ENCODE measurements at regions of chr2 and their contacts with region 1.

Region 1: GRCh38 chr2:47906157-47907038 is at the start of gene FBXO11:
- DNase-seq: peak; percentile 86
- ATAC-seq: peak; percentile 93
- H3K4me3 ChIP-seq: peak within 1 kb of the TSS; percentile 91 to 98
- H3K27ac ChIP-seq: peak within 1 kb of the TSS; percentile 97
- H3K4me1 ChIP-seq: peaks cover 20% of the 10 kb centered on the region
- H3K27me3 ChIP-seq: no peaks in the 10 kb centered on the region
- CTCF ChIP-seq: no peak; the same call in 1 of the 2 replicates
- total RNA-seq, gene FBXO11: 58.9 TPM

Region 2: DNA sequence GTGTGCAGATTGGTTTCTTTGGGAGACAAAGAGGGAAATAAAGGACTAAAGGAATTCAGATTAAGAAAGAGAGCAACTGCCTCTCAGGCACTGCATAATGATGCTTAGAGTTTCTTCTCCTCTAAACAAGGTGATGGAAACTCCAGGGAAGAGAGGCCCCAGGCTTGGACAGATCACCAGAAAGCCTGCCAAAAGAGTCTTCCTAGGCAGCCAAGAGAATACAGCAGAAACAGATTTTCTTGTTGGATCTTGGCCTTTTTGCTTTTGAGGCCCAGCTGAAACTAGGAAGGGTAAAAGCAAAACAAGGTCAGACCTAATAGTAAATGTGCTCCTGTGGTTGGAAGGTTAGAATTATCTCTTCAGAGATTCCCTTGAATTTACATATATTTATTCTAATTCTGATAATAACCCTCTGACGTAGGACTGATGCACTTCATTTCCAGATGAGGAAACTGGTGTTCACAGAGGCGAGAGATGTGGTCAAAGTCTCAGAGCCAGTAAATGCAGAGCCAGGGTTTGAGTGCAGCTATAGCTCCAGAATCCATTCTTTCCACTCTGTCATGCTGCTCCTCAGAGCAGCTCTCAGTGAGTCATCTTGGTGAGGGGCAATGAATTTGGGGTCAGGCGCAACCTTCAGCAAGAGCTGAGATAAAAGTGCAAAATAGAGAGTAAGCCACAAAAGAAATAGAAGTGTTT is 142.2 kb after region 1 on chr2:
- CTCF ChIA-PET with region 1: no interaction called
- POLR2A ChIA-PET with region 1: no interaction called
- in situ Hi-C with region 1: no loop called
- intact Hi-C with region 1: no loop called
- DNase-seq: no peak
- ATAC-seq: no peak
- H3K4me3 ChIP-seq: no peak overlapping the region
- H3K27ac ChIP-seq: no peak overlapping the region
- H3K4me1 ChIP-seq: no peaks in the 10 kb centered on the region
- H3K27me3 ChIP-seq: peaks cover 3% of the 10 kb centered on the region
- CTCF ChIP-seq: no peak

Region 3: GRCh38 chr2:48070415-48070814 is 164.0 kb after region 1 on chr2:
- CTCF ChIA-PET with region 1: no interaction called
- POLR2A ChIA-PET with region 1: no interaction called
- in situ Hi-C with region 1: no loop called
- intact Hi-C with region 1: no loop called
- DNase-seq: no peak
- ATAC-seq: no peak
- H3K4me3 ChIP-seq: no peak overlapping the region
- H3K27ac ChIP-seq: no peak overlapping the region
- H3K4me1 ChIP-seq: no peaks in the 10 kb centered on the region
- H3K27me3 ChIP-seq: no peaks in the 10 kb centered on the region; the same call in 1 of the 2 replicates
- CTCF ChIP-seq: no peak

Region 4: GRCh38 chr2:48107326-48107925 is 201.0 kb after region 1 on chr2:
- CTCF ChIA-PET with region 1: no interaction called
- POLR2A ChIA-PET with region 1: interaction called, 3 read pairs
- in situ Hi-C with region 1: no loop called
- intact Hi-C with region 1: loop called (anchors 2 kb)
- DNase-seq: peak; percentile 17
- ATAC-seq: no peak
- H3K4me3 ChIP-seq: peak overlapping the region in 1 of 2 experiments; percentile 42; a peak in 1 of 4 replicates
- H3K27ac ChIP-seq: peak overlapping the region; percentile 60
- H3K4me1 ChIP-seq: peaks cover 24% of the 10 kb centered on the region
- H3K27me3 ChIP-seq: no peaks in the 10 kb centered on the region
- CTCF ChIP-seq: no peak